ENCODE measurements at regions of chr1 and their contacts with region 1.

Region 1: DNA sequence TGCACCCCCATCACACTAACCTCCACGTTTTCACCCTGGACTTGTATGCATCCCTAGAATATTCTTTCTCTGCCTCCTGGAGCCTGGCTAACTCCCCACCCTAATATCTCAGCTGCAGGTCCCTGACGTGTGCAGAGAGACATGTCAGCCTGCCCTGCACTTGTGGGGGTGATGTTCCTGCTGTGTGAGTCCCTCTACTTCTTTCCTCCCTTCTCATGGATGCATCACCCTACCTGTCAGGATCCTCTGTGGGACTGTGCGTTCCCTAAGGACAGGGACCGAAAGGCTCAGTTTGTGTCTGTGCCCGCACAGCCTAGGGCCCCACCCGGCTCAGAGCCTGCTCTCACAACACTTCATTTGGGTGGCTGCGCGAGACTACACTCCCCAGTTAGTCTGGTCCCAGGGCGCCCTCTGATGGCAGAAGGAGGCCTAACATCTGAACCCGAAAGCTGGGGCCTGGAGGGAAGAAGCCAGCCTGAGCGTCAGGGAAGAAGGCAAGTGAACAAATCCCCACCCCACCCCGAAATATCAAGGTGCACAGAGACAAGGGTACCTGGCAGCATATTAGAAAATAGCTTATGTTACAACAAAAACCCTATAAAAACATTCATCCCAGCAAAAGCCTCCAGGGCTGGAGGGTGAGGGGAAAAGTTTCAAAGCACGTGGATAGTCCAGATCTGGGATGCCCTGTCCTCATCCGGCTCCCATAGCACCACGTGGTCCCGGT is 3.7 kb downstream of the CD52 start:
- DNase-seq: peak; percentile 97
- H3K4me3 Mint-ChIP-seq: peak overlapping the region; percentile 90
- H3K27ac Mint-ChIP-seq: peak overlapping the region; percentile 96
- H3K4me1 Mint-ChIP-seq: peaks cover 58% of the 10 kb centered on the region
- H3K27me3 Mint-ChIP-seq: no peaks in the 10 kb centered on the region

Region 2: GRCh38 chr1:26169669-26170471 is 151.6 kb before region 1 on chr1 and contains the start of gene ZNF593:
- CTCF ChIA-PET with region 1: interaction called, 12 read pairs
- DNase-seq: peak; percentile 89
- H3K4me3 Mint-ChIP-seq: peak within 1 kb of the TSS; percentile 85
- H3K27ac Mint-ChIP-seq: peak within 1 kb of the TSS; percentile 84
- H3K4me1 Mint-ChIP-seq: peaks cover 39% of the 10 kb centered on the region
- H3K27me3 Mint-ChIP-seq: peaks cover 35% of the 10 kb centered on the region

Region 3: DNA sequence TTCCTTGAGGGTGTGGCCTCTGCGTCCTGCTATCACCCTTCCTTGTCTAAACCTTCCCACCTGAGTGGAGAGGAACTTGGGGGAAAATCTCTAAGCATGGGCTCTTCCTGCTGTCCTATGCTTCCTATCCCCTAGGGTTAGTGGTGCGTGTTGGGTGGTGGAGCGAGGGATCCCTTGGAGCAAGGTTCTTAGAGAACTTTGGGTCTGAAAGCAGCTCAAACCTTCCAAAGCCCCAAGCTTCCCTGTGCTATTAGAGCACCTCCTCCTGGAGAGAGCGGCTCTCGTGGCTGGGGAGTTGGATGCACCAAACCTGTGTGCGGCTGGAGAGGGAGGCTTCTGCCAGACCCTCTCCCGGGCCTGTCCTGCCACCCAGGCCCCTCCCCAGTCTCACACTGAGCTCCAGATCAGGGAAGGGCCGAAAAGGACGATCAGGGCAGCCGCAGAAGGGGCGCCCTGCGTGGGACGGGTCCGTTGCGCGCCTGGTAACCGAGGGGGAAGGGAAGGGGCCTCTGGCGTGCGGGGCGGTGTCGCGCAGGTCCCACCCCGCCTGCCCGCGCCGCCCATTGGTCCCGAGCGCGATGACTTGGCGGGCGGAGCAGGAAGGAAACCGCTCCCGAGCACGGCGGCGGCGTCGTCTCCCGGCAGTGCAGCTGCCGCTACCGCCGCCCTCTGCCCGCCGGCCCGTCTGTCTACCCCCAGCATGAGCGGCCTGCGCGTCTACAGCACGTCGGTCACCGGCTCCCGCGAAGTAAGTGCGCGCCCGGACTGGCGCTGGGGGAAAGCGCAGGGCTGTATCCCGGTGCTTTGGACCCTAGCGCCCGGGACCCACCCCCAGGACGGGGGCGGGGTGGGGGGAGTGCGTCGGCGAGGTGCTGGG is 41.8 kb before region 1 on chr1 and contains the start of gene SH3BGRL3:
- CTCF ChIA-PET with region 1: interaction called, 632 read pairs
- DNase-seq: peak; percentile 91
- H3K4me3 Mint-ChIP-seq: peak within 1 kb of the TSS; percentile 91
- H3K27ac Mint-ChIP-seq: peak within 1 kb of the TSS; percentile 93
- H3K4me1 Mint-ChIP-seq: peaks cover 88% of the 10 kb centered on the region
- H3K27me3 Mint-ChIP-seq: no peaks in the 10 kb centered on the region

Region 4: GRCh38 chr1:26363549-26364448 is 42.3 kb after region 1 on chr1:
- CTCF ChIA-PET with region 1: interaction called, 59 read pairs
- DNase-seq: peak; percentile 90
- H3K4me3 Mint-ChIP-seq: no peak overlapping the region
- H3K27ac Mint-ChIP-seq: no peak overlapping the region
- H3K4me1 Mint-ChIP-seq: peaks cover 47% of the 10 kb centered on the region
- H3K27me3 Mint-ChIP-seq: peaks cover 79% of the 10 kb centered on the region

Region 5: GRCh38 chr1:26399034-26399433 is 77.6 kb after region 1 on chr1:
- CTCF ChIA-PET with region 1: interaction called, 17 read pairs
- DNase-seq: no peak
- H3K4me3 Mint-ChIP-seq: no peak overlapping the region
- H3K27ac Mint-ChIP-seq: no peak overlapping the region
- H3K4me1 Mint-ChIP-seq: peaks cover 7% of the 10 kb centered on the region
- H3K27me3 Mint-ChIP-seq: peaks cover 27% of the 10 kb centered on the region

Region 6: GRCh38 chr1:26438041-26438440 is 116.6 kb after region 1 on chr1:
- CTCF ChIA-PET with region 1: no interaction called
- DNase-seq: no peak
- H3K4me3 Mint-ChIP-seq: no peak overlapping the region
- H3K27ac Mint-ChIP-seq: peak overlapping the region; percentile 65
- H3K4me1 Mint-ChIP-seq: peaks cover 10% of the 10 kb centered on the region
- H3K27me3 Mint-ChIP-seq: no peaks in the 10 kb centered on the region

Measured in activated naive CD4-positive, alpha-beta T cell treated with anti-CD3 and anti-CD28 coated beads, Interleukin-2, amount 10 ng/mL, durations not matched to agents 7 days and 5 days (primary cell).